ENCODE measurements at regions of chr1 and their contacts with region 1.

Region 1: GRCh38 chr1:169601093-169601881 is 15.0 kb upstream of the F5 start:
- DNase-seq: no peak
- H3K4me3 ChIP-seq: peak overlapping the region in 1 of 59 donors; percentile 3
- H3K27ac ChIP-seq: no peak overlapping the region
- H3K27me3 ChIP-seq: peaks cover 0 to 3% (median 0%) of the 10 kb centered on the region in 45 donors
- CTCF ChIP-seq: peak in 55 of 56 donors; percentile 30 to 87 (median 64)

Region 2: GRCh38 chr1:169650551-169650950 is 49.3 kb after region 1 on chr1:
- intact Hi-C with region 1: loop called in 1 of 2 experiments (anchors 5 kb)
- DNase-seq: no peak
- H3K4me3 ChIP-seq: no peak overlapping the region
- H3K27ac ChIP-seq: peak overlapping the region in 51 of 59 donors; percentile 4 to 94 (median 73)
- H3K27me3 ChIP-seq: no peaks in the 10 kb centered on the region
- CTCF ChIP-seq: peak in 4 of 56 donors; percentile 2 to 16 (median 12)

Region 3: GRCh38 chr1:169711469-169712281 is 110.4 kb after region 1 on chr1 and contains the start of gene SELL:
- intact Hi-C with region 1: loop called (anchors 2 kb)
- DNase-seq: peak in 7 of 10 donors; percentile 7 to 56 (median 46)
- H3K4me3 ChIP-seq: peak within 1 kb of the TSS in 54 of 59 donors; percentile 4 to 61 (median 34)
- H3K27ac ChIP-seq: peak within 1 kb of the TSS in 19 of 59 donors; percentile 3 to 68 (median 34)
- H3K27me3 ChIP-seq: no peaks in the 10 kb centered on the region
- CTCF ChIP-seq: peak; percentile 37 to 86 (median 70)
- total RNA-seq, gene SELL: 0.77 to 22.0 (median 4.8) TPM

Region 4: GRCh38 chr1:169779980-169780379 is 178.7 kb after region 1 on chr1:
- intact Hi-C with region 1: loop called in 1 of 2 experiments (anchors 10 kb)
- DNase-seq: no peak
- H3K4me3 ChIP-seq: no peak overlapping the region
- H3K27ac ChIP-seq: no peak overlapping the region
- H3K27me3 ChIP-seq: peaks cover 0 to 13% (median 0%) of the 10 kb centered on the region in 45 donors
- CTCF ChIP-seq: no peak

Region 5: DNA sequence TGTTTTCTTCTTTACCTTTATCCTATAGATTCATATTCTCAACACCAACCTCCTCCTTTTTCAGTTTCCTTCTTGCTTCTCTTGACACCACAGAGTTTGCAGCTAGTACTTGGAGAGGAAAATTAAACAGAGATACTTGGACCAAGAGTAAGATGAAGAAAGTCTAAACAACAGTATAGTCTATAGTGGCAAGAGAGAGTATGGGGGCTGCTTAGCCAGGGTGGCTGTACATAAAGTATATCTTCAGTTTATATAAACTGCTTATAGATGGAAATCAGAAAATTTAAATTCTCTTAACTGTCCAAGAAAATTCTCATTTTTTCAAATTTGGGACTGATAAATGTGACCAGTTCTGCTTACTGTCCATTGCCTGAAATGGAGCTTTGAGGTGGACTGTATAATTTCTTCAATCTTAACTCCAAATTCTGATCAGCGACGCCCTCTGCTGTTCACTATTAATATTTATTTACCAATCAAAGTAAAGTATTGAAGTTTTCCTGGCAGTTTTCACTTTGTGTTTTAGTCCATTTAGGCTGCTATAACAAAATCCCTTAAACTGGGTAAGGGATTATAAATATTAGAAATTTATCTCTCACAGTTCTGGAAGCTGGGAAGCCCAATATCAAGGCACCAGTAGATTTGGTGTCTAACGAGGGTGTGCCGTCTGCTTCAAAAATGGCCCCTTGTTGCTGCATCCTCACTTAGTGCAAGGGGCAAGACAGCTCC is 208.2 kb after region 1 on chr1:
- intact Hi-C with region 1: loop called in 1 of 2 experiments (anchors 5 kb)
- DNase-seq: no peak
- H3K4me3 ChIP-seq: no peak overlapping the region
- H3K27ac ChIP-seq: no peak overlapping the region
- H3K27me3 ChIP-seq: no peaks in the 10 kb centered on the region
- CTCF ChIP-seq: peak; percentile 53 to 84 (median 68)

Measured in dorsolateral prefrontal cortex (tissue), 120 donors.